ENCODE measurements at regions of chr11 and their contacts with region 1.

Region 1: GRCh38 chr11:76807206-76807875 is 24.2 kb downstream of the TSKU start:
- DNase-seq: peak; percentile 90
- H3K4me3 ChIP-seq: no peak overlapping the region
- H3K27ac ChIP-seq: no peak overlapping the region
- H3K4me1 ChIP-seq: no peaks in the 10 kb centered on the region
- H3K27me3 ChIP-seq: no peaks in the 10 kb centered on the region
- CTCF ChIP-seq: peak; percentile 68

Region 2: DNA sequence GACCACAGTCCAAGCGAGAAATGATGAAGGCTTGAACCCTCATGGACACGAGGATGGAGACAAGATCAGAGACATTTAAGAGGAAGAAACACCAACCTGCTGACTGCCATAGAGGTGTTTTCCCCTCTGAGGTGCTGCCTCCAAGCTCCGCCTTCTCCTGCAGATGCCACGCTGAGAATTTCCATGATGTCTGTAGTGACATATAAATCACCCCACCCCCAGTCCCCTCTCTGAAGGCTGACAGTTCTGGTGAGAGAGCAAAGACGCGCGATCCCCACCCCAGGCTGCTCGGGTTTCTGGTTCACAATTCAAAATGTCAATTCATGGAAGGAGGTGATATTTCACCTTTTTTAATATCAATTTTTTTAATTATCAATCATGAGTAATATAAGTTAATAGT is 165.0 kb before region 1 on chr11:
- intact Hi-C with region 1: no loop called
- DNase-seq: peak; percentile 16
- H3K4me3 ChIP-seq: no peak overlapping the region
- H3K27ac ChIP-seq: no peak overlapping the region
- H3K4me1 ChIP-seq: no peaks in the 10 kb centered on the region
- H3K27me3 ChIP-seq: no peaks in the 10 kb centered on the region
- CTCF ChIP-seq: no peak

Region 3: GRCh38 chr11:76850815-76851214 is 43.5 kb after region 1 on chr11:
- intact Hi-C with region 1: no loop called
- DNase-seq: no peak
- H3K4me3 ChIP-seq: no peak overlapping the region
- H3K27ac ChIP-seq: no peak overlapping the region
- H3K4me1 ChIP-seq: no peaks in the 10 kb centered on the region
- H3K27me3 ChIP-seq: no peaks in the 10 kb centered on the region
- CTCF ChIP-seq: no peak

Region 4: GRCh38 chr11:76919887-76920746 is 112.8 kb after region 1 on chr11:
- intact Hi-C with region 1: loop called (anchors 2 kb)
- DNase-seq: peak; percentile 89
- H3K4me3 ChIP-seq: no peak overlapping the region
- H3K27ac ChIP-seq: peak overlapping the region; percentile 58
- H3K4me1 ChIP-seq: no peaks in the 10 kb centered on the region
- H3K27me3 ChIP-seq: no peaks in the 10 kb centered on the region
- CTCF ChIP-seq: peak; percentile 96